ENCODE measurements at regions of chr6 and their contacts with region 1.

Region 1: GRCh38 chr6:157323255-157323965 is at the start of gene TMEM242:
- DNase-seq: peak; percentile 95
- H3K4me3 Mint-ChIP-seq: peak within 1 kb of the TSS; percentile 97
- H3K27ac Mint-ChIP-seq: peak within 1 kb of the TSS; percentile 86
- H3K4me1 Mint-ChIP-seq: peaks cover 35% of the 10 kb centered on the region
- H3K27me3 Mint-ChIP-seq: peaks cover 12% of the 10 kb centered on the region
- total RNA-seq, gene TMEM242: 8.1 to 8.6 TPM

Region 2: GRCh38 chr6:157339432-157339831 is 16.0 kb after region 1 on chr6:
- CTCF ChIA-PET with region 1: interaction called, 12 read pairs
- POLR2A ChIA-PET with region 1: no interaction called
- intact Hi-C with region 1: no loop called
- DNase-seq: no peak
- H3K4me3 Mint-ChIP-seq: no peak overlapping the region
- H3K27ac Mint-ChIP-seq: no peak overlapping the region
- H3K4me1 Mint-ChIP-seq: no peaks in the 10 kb centered on the region
- H3K27me3 Mint-ChIP-seq: peaks cover 41% of the 10 kb centered on the region

Region 3: DNA sequence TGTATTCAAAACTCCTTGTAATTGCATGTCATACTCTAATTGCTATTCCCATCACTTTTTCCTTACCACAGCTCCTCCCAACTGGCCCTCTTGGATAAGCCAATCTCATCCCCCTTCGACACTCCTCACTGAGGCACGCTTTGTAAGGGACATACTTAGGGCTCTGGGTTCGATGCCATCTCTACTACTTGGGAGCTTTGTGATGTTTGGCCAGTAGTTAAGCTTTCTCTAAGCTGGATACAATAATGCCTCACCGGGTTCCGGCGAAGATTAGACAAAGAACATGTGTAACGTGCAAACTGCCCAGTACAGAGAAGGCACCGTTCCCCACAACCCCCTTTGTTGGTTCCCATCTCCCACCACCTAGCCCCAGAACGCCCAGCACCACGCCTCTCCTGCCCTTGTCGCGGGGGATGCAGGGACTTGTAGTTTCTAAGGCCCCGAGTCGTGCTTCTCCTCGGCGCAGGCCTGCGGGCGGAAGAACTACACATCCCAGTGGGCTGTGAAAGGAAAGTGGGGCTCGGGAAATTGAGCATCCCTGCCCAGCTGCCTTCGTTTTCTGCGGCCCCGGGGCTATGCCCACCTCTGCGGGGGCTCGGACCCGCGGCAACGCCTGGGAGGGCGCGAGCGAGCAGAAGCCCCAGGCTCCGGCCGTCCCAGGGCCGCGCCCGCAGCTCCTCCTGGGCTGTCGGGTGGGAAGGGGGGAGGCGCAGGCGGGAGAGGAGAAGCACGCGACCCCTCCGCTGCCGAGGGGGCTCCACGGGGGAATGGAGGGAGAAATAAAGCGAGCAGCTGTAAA is 56.4 kb after region 1 on chr6:
- CTCF ChIA-PET with region 1: interaction called, 3 read pairs
- POLR2A ChIA-PET with region 1: interaction called, 19 read pairs
- intact Hi-C with region 1: loop called (anchors 2 kb)
- DNase-seq: peak; percentile 93
- H3K4me3 Mint-ChIP-seq: peak overlapping the region; percentile 78
- H3K27ac Mint-ChIP-seq: peak overlapping the region; percentile 71
- H3K4me1 Mint-ChIP-seq: peaks cover 31% of the 10 kb centered on the region
- H3K27me3 Mint-ChIP-seq: peaks cover 9% of the 10 kb centered on the region

Region 4: GRCh38 chr6:157443066-157443800 is 119.8 kb after region 1 on chr6:
- CTCF ChIA-PET with region 1: no interaction called
- POLR2A ChIA-PET with region 1: no interaction called
- intact Hi-C with region 1: no loop called
- DNase-seq: peak; percentile 49
- H3K4me3 Mint-ChIP-seq: no peak overlapping the region
- H3K27ac Mint-ChIP-seq: peak overlapping the region; percentile 0
- H3K4me1 Mint-ChIP-seq: peaks cover 16% of the 10 kb centered on the region
- H3K27me3 Mint-ChIP-seq: peaks cover 2% of the 10 kb centered on the region

Region 5: DNA sequence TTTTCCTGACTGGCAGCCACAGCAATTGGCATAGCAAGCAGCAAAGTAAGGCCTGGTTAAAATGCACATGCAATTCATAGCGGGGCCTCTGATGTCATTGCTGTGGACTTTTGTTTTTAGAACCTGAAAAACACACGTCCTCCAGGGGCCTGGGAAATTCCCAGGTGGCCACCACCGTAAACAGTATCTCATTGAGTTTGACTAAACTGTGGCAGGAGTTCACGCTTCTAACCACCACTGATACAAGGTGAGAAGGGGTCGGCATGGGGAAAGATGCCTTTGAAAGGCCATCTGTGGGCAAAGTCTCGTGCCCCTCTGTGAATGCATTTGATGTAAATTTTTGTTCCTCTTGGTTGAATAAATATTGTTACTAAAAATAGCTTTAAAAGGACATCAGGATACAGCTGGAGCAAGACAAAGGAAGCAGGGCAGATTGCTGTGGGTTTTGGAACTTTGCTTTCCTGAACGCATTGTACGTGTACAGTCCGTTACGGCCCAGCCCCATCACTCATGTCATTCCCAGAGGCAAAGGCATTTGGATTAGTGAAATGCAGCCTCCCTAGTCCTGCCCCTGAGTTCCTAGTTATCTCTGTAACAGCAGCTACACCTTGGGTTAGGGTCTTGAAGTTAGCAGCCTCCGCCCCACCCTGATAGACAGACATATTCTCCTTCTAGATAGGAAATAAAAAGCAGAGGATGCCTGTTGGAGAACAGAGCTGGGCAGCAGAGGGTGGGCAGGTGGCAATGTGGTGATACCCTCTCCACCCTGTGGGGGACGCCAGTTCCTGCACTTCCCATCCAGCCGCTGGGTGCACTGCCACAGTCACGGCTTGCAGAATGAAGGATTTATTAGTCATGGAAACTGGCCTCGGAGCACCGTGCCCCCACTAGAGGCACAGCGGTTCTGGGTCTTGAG is 137.8 kb after region 1 on chr6:
- CTCF ChIA-PET with region 1: no interaction called
- POLR2A ChIA-PET with region 1: interaction called, 3 read pairs
- intact Hi-C with region 1: loop called (anchors 2 kb)
- DNase-seq: peak; percentile 89
- H3K4me3 Mint-ChIP-seq: no peak overlapping the region
- H3K27ac Mint-ChIP-seq: peak overlapping the region; percentile 75
- H3K4me1 Mint-ChIP-seq: peaks cover 40% of the 10 kb centered on the region
- H3K27me3 Mint-ChIP-seq: peaks cover 7% of the 10 kb centered on the region

Region 6: GRCh38 chr6:157535339-157536222 is 212.2 kb after region 1 on chr6:
- CTCF ChIA-PET with region 1: no interaction called
- POLR2A ChIA-PET with region 1: no interaction called
- intact Hi-C with region 1: loop called (anchors 1 kb)
- DNase-seq: peak; percentile 45
- H3K4me3 Mint-ChIP-seq: no peak overlapping the region
- H3K27ac Mint-ChIP-seq: peak overlapping the region; percentile 53
- H3K4me1 Mint-ChIP-seq: peaks cover 24% of the 10 kb centered on the region
- H3K27me3 Mint-ChIP-seq: peaks cover 13% of the 10 kb centered on the region

Region 7: DNA sequence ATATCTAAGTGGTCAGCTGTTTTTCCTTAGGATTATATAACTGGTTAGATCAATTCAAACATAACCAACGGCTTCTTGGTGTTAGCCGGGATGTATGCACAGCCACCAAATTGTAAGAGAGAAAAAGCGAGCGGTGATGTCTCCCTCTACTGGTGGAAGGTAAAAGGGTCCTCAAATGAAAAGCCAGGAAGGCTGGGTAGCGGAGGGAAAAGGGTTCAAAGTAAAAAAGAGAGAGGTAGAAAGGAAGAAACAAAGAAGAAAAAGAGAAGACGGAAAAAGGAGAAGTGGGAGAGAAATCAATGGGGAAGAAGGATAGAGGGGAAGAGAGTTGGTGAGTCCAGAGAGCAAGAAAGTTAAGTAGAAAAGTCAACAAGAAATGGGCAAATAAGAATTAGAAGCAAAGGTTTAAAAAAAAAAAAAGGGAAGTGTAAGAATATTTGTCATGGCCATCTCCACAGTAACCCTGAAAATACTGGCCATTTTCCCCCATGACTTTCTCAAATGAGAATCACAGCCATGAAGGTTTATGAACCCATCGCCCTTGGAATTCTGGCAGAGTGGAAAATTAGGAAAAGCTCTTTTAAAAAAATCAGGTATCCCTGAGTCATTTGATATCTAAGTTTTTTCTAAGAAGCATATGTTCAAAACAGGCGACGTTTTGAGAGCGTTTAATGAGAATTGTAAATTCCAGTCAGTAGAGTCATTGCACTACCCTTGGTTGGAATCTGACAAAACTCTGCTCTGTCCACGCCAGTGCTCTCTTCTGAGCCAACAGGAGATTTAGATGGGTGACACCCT is 344.0 kb after region 1 on chr6:
- CTCF ChIA-PET with region 1: interaction called, 37 read pairs
- POLR2A ChIA-PET with region 1: no interaction called
- intact Hi-C with region 1: no loop called
- DNase-seq: peak; percentile 68
- H3K4me3 Mint-ChIP-seq: no peak overlapping the region
- H3K27ac Mint-ChIP-seq: no peak overlapping the region
- H3K4me1 Mint-ChIP-seq: peaks cover 13% of the 10 kb centered on the region
- H3K27me3 Mint-ChIP-seq: peaks cover 7% of the 10 kb centered on the region

Region 8: DNA sequence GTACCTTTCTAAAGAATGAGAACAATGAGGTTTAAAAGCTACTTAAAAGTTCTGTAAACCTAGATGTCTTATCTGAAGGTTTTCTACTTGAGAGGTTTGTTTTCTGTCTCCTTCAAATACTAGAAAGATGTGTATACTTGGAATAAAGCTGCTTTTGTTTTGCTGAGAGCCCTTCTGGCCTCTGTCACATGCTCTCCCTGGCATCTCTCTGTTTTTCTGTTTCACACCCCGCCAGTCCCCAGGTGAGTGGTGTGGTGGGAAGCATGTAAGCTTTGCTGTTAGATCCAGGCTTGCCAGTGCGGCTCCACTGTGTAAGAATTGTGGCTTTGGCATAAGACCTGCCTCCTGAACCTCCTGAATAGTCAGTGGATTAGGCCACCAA is 556.5 kb after region 1 on chr6:
- CTCF ChIA-PET with region 1: interaction called, 3 read pairs
- POLR2A ChIA-PET with region 1: no interaction called
- intact Hi-C with region 1: loop called (anchors 10 kb)
- DNase-seq: no peak
- H3K4me3 Mint-ChIP-seq: no peak overlapping the region
- H3K27ac Mint-ChIP-seq: peak overlapping the region; percentile 42
- H3K4me1 Mint-ChIP-seq: peaks cover 72% of the 10 kb centered on the region
- H3K27me3 Mint-ChIP-seq: no peaks in the 10 kb centered on the region